ENCODE measurements at regions of chr1 and their contacts with region 1.

Region 1: DNA sequence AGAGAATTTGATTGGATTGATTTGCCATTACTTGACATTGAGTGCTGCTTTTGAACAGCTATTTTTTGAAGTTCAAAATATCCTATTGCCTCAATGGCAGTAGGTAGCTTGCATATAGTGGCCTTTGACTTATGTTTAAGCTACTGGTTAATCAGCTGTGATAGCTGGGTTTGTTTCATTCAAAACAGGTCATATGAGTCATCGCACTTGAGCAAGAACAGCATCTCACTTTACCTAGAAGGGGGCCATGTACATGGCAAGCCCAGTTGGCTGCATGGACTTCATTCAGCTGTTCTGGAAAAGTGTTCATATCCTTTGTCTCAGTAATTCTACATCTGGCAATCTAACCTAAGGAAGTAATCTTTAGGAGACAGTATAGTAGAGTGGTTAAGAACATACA is 29.0 kb upstream of the ARID1A start:
- DNase-seq: no peak
- H3K4me3 ChIP-seq: no peak overlapping the region
- CTCF ChIP-seq: no peak

Region 2: GRCh38 chr1:26677306-26678115 is 10.7 kb after region 1 on chr1:
- CTCF ChIA-PET with region 1: interaction called, 11 read pairs
- POLR2A ChIA-PET with region 1: no interaction called
- DNase-seq: no peak
- H3K4me3 ChIP-seq: no peak overlapping the region
- CTCF ChIP-seq: peak; percentile 43

Region 3: GRCh38 chr1:26864610-26865527 is 198.0 kb after region 1 on chr1:
- CTCF ChIA-PET with region 1: no interaction called
- POLR2A ChIA-PET with region 1: no interaction called
- DNase-seq: peak; percentile 86
- H3K4me3 ChIP-seq: peak overlapping the region; percentile 59
- CTCF ChIP-seq: no peak

Measured in AG04449 (cell line).